ENCODE measurements at regions of chr5 and their contacts with region 1.

Region 1: GRCh38 chr5:55936100-55936693 is 58.6 kb downstream of the IL6ST start:
- DNase-seq: peak; percentile 84 to 94 (median 90)
- ATAC-seq: peak; percentile 73 to 81
- H3K4me3 ChIP-seq: no peak overlapping the region
- H3K27ac ChIP-seq: no peak overlapping the region
- H3K4me1 ChIP-seq: no peaks in the 10 kb centered on the region
- H3K27me3 ChIP-seq: no peaks in the 10 kb centered on the region

Region 2: DNA sequence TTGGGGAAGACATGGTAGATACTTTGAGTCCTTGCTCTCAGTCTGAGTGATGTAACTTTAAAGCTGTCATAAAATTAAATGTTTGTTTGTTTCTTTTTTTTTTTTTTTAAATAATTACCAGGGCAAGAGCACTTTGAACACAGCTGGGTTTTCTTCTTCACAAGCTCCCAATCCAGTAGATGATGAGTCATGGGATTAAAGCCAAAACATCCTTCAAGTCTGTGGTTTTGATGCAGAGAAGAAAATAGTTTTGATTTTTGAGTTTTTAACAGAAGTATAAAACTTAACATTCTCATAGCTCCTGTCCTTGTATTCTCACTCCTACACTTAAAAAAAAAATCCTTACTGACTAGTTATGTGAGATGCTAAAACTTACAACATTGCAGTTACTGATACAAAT is 119.9 kb before region 1 on chr5:
- intact Hi-C with region 1: no loop called
- DNase-seq: no peak
- ATAC-seq: no peak
- H3K4me3 ChIP-seq: no peak overlapping the region
- H3K27ac ChIP-seq: no peak overlapping the region
- H3K4me1 ChIP-seq: no peaks in the 10 kb centered on the region
- H3K27me3 ChIP-seq: peaks cover 3% of the 10 kb centered on the region

Region 3: DNA sequence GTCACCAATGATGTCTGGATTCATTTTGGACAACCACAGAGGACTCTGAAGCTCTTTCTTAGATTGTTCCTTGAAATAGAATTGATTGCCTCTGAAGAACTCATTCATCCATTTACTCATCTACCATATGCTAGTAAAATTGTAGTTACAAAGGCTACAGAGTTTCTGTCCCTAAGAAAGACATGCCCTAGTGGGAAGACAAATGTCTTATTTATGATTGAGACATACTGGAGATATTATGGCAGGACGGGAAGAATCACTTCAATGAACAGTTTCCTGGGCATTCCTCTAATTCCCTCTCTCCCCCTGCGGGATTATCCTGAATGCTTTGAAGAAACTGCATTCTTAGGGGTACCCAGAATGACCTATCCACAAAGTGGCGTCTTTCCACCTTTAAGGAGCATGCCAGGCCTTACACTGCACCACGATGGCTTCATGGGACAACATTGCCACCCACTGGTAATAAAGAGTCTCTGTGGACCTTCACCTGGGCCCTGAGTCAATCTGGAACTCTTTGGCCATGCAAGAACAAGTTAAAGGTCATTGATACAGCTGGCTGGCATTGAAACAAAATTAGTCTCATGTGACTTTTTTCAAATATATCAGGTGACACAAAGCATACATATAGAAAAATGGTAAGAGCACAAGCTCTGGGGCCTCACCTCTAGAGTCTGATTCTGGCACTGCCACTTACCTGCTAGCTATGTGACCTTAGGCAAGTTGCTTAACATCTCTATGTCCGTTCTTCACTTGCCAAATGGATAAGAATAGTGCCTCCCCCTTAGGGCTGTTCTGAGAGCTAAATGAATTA is 264.9 kb after region 1 on chr5:
- intact Hi-C with region 1: loop called (anchors 2 to 10 kb)
- DNase-seq: peak; percentile 39 to 65 (median 62)
- ATAC-seq: peak; percentile 97
- H3K4me3 ChIP-seq: no peak overlapping the region
- H3K27ac ChIP-seq: no peak overlapping the region
- H3K4me1 ChIP-seq: no peaks in the 10 kb centered on the region
- H3K27me3 ChIP-seq: no peaks in the 10 kb centered on the region

Region 4: DNA sequence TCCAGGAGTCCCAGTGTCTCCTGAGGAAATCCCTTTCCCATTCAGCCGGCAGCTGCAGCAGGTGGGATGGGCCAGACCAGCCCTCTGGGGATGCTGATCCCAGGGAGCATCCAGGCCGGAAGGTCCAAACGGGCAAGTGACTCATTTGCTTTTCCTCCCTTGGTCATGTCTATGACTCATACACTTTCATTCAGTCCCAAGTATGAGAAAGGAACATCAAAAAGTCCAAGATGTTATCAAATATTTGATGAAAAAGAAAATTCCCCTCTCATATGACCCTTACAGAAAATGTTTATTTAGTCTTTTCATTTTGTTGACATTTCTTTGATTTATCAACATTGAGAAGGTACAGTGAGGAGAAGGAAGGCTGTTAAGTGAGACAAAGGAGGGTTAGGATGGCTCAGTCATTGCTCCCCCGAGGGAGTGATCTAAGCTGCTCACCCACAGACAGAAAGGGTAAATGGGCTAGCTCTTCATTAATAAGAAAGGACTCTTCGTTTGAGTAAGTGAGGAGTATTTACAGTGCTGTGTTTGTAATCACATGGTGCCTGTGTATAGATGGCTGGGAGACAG is 414.5 kb after region 1 on chr5:
- intact Hi-C with region 1: no loop called
- DNase-seq: peak; percentile 74 to 83 (median 80)
- ATAC-seq: peak; percentile 87 to 97
- H3K4me3 ChIP-seq: no peak overlapping the region
- H3K27ac ChIP-seq: no peak overlapping the region
- H3K4me1 ChIP-seq: peaks cover 6% of the 10 kb centered on the region
- H3K27me3 ChIP-seq: no peaks in the 10 kb centered on the region